ENCODE measurements at regions of chr9 and their contacts with region 1.

Region 1: GRCh38 chr9:129343424-129344375 is 165.6 kb upstream of the IER5L start:
- DNase-seq: peak; percentile 97 to 99 (median 97)
- H3K4me3 ChIP-seq: peak overlapping the region in 1 of 3 experiments; percentile 12
- H3K4me3 Mint-ChIP-seq: peak overlapping the region; percentile 66 to 79
- H3K27ac ChIP-seq: peak overlapping the region; percentile 97 to 99
- H3K27ac Mint-ChIP-seq: peak overlapping the region; percentile 97 to 99 (median 97)
- H3K4me1 ChIP-seq: peaks cover 86 to 100% of the 10 kb centered on the region in 2 donors
- H3K4me1 Mint-ChIP-seq: peaks cover 66% of the 10 kb centered on the region
- H3K27me3 ChIP-seq: no peaks in the 10 kb centered on the region
- H3K27me3 Mint-ChIP-seq: no peaks in the 10 kb centered on the region
- CTCF ChIP-seq: peak; percentile 24

Region 2: DNA sequence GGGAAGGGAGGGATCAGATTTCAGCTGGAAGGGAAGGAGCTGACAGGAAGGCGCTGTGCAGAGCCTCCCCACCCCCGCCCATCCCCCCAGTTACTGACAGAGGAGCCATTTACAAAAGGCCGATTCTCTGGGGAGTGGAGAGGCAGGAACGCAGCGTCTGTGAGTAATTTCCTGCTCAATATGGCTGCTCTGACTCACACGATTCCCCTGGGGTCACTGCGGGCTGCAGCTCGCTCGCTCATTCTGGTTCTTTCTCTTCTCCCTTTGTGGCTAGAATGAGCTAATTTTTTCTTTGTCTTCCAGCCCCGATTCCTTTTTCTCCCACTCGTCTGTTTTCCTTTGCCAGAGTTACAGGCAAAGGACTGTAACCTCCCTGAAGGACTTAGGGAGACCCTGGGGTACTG is 203.7 kb before region 1 on chr9:
- intact Hi-C with region 1: loop called in 1 of 2 experiments (anchors 2 kb)
- DNase-seq: peak; percentile 94 to 98 (median 95)
- H3K4me3 ChIP-seq: peak overlapping the region; percentile 27 to 73 (median 32)
- H3K4me3 Mint-ChIP-seq: peak overlapping the region; percentile 79 to 92
- H3K27ac ChIP-seq: peak overlapping the region; percentile 97 to 99
- H3K27ac Mint-ChIP-seq: peak overlapping the region; percentile 96 to 98 (median 97)
- H3K4me1 ChIP-seq: peaks cover 37 to 47% of the 10 kb centered on the region in 2 donors
- H3K4me1 Mint-ChIP-seq: peaks cover 41% of the 10 kb centered on the region
- H3K27me3 ChIP-seq: no peaks in the 10 kb centered on the region
- H3K27me3 Mint-ChIP-seq: peaks cover 0 to 2% (median 0%) of the 10 kb centered on the region in 3 donors
- CTCF ChIP-seq: no peak

Region 3: GRCh38 chr9:129383561-129384416 is 40.1 kb after region 1 on chr9:
- intact Hi-C with region 1: loop called in 1 of 2 experiments (anchors 5 kb)
- DNase-seq: peak; percentile 92 to 93 (median 92)
- H3K4me3 ChIP-seq: peak overlapping the region; percentile 41 to 79 (median 59)
- H3K4me3 Mint-ChIP-seq: peak overlapping the region; percentile 76 to 88
- H3K27ac ChIP-seq: peak overlapping the region; percentile 91 to 96
- H3K27ac Mint-ChIP-seq: peak overlapping the region; percentile 97 to 99 (median 97)
- H3K4me1 ChIP-seq: peaks cover 26 to 38% of the 10 kb centered on the region in 2 donors
- H3K4me1 Mint-ChIP-seq: peaks cover 35% of the 10 kb centered on the region
- H3K27me3 ChIP-seq: no peaks in the 10 kb centered on the region
- H3K27me3 Mint-ChIP-seq: peaks cover 2% of the 10 kb centered on the region in 3 donors
- CTCF ChIP-seq: peak; percentile 26

Region 4: GRCh38 chr9:129413537-129414376 is 70.1 kb after region 1 on chr9:
- intact Hi-C with region 1: loop called in 1 of 2 experiments (anchors 2 kb)
- DNase-seq: peak; percentile 98
- H3K4me3 ChIP-seq: peak overlapping the region; percentile 31 to 68 (median 49)
- H3K4me3 Mint-ChIP-seq: peak overlapping the region; percentile 74 to 87
- H3K27ac ChIP-seq: peak overlapping the region; percentile 98
- H3K27ac Mint-ChIP-seq: peak overlapping the region; percentile 97 to 99 (median 98)
- H3K4me1 ChIP-seq: peaks cover 48 to 49% of the 10 kb centered on the region in 2 donors
- H3K4me1 Mint-ChIP-seq: peaks cover 38% of the 10 kb centered on the region
- H3K27me3 ChIP-seq: no peaks in the 10 kb centered on the region
- H3K27me3 Mint-ChIP-seq: peaks cover 1 to 2% (median 2%) of the 10 kb centered on the region in 3 donors
- CTCF ChIP-seq: no peak

Region 5: GRCh38 chr9:129487642-129488409 is 144.1 kb after region 1 on chr9:
- intact Hi-C with region 1: loop called in 1 of 2 experiments (anchors 2 kb)
- DNase-seq: peak; percentile 39 to 66 (median 57)
- H3K4me3 ChIP-seq: peak overlapping the region; percentile 42 to 73 (median 60)
- H3K4me3 Mint-ChIP-seq: peak overlapping the region; percentile 76 to 84
- H3K27ac ChIP-seq: peak overlapping the region; percentile 90 to 96
- H3K27ac Mint-ChIP-seq: peak overlapping the region; percentile 95 to 100 (median 97)
- H3K4me1 ChIP-seq: peaks cover 65 to 72% of the 10 kb centered on the region in 2 donors
- H3K4me1 Mint-ChIP-seq: peaks cover 68% of the 10 kb centered on the region
- H3K27me3 ChIP-seq: no peaks in the 10 kb centered on the region
- H3K27me3 Mint-ChIP-seq: peaks cover 4 to 12% (median 9%) of the 10 kb centered on the region in 3 donors
- CTCF ChIP-seq: no peak

Region 6: GRCh38 chr9:129626079-129626624 is 282.5 kb after region 1 on chr9 and contains the start of gene NTMT1:
- intact Hi-C with region 1: loop called in 1 of 2 experiments (anchors 5 kb)
- DNase-seq: peak; percentile 90 to 92 (median 90)
- H3K4me3 ChIP-seq: peak within 1 kb of the TSS; percentile 51 to 83 (median 75)
- H3K4me3 Mint-ChIP-seq: peak within 1 kb of the TSS; percentile 80 to 94
- H3K27ac ChIP-seq: peak within 1 kb of the TSS; percentile 86 to 97
- H3K27ac Mint-ChIP-seq: peak within 1 kb of the TSS; percentile 89 to 96 (median 93)
- H3K4me1 ChIP-seq: peaks cover 47 to 56% of the 10 kb centered on the region in 2 donors
- H3K4me1 Mint-ChIP-seq: peaks cover 64% of the 10 kb centered on the region
- H3K27me3 ChIP-seq: peaks cover 0 to 5% of the 10 kb centered on the region in 2 donors
- H3K27me3 Mint-ChIP-seq: peaks cover 5 to 9% (median 6%) of the 10 kb centered on the region in 3 donors
- CTCF ChIP-seq: no peak
- polyA plus RNA-seq, gene NTMT1: 16.0 to 43.9 (median 28.2) TPM

Region 7: DNA sequence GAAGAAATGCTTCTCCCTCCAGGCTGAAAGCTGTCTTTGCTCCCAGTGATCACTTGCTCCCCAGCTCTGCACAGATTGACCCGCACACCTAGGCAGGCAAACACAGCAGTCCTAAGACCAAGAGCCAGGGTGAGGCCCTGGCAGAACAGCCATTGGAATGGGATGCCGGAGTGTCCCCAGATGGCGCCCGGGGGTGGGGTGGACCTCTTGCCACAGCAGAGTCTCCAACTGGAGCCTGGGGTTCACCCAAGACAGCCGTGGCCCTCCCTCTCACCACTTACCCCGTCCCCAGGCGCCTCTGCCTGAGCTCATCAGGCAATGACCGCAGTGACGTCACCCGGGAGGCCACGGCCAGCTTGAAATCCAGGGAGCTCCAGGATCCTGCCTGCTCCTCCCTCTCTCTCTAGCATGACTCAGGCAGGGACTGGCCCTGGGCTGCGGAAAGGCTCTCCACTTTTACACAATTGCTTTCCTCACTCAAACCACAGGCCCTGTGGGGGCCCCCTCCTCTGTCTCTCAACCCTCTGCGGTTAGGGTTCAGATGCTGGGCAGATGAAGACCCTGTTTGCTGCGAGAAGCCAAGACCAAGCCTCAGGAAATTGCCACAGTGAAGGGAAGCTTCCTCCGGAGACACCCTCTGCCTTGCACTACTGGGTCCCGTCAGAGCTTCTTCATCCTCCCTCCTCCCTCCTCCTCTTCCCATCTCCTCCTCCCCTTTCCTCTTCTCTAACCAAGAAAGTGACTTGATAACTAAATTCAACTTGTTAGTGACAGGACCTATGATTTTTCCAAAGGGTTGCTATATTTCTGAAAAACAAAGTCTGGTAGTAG is 433.5 kb after region 1 on chr9:
- intact Hi-C with region 1: loop called in 1 of 2 experiments (anchors 10 kb)
- DNase-seq: peak; percentile 100
- H3K4me3 ChIP-seq: peak overlapping the region in 1 of 3 experiments; percentile 57
- H3K4me3 Mint-ChIP-seq: peak overlapping the region; percentile 71 to 83
- H3K27ac ChIP-seq: peak overlapping the region; percentile 61 to 81
- H3K27ac Mint-ChIP-seq: peak overlapping the region; percentile 95 to 99 (median 97)
- H3K4me1 ChIP-seq: peaks cover 75 to 83% of the 10 kb centered on the region in 2 donors
- H3K4me1 Mint-ChIP-seq: peaks cover 82% of the 10 kb centered on the region
- H3K27me3 ChIP-seq: no peaks in the 10 kb centered on the region
- H3K27me3 Mint-ChIP-seq: peaks cover 10 to 15% (median 10%) of the 10 kb centered on the region in 3 donors
- CTCF ChIP-seq: no peak

Measured in CD14-positive monocyte (primary cell).